ENCODE measurements at regions of chr15 and their contacts with region 1.

Region 1: DNA sequence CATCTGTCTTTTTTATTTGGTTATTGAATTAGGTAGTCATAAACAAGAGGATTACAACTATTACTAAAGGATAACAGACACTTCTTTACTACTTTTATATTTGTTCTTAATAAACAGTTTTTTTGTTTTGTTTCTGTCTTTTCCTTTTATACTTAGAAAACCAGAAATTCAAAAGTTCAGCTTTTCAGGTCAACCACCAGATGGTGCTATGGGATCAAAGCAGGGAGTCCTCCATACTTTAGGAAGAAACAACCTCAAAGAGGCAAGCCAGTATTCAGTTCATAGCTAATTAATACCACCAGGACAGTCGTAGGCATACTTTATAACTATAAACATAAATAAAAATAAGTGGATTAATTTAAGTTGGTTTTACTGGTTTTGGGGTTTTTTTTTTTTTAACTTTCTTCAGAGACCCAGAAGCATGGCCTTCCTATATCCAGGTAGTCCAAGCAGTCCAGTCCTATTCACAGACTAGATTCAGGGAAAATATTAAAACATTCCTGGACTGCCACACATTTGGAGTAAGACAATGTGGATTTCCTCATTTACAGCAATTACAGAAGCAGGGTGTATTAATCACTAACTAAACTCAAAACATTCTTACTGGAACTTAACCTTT is 16.0 kb upstream of the EID1 start:
- DNase-seq: peak; percentile 77
- H3K4me3 ChIP-seq: no peak overlapping the region
- H3K27ac ChIP-seq: no peak overlapping the region
- H3K4me1 ChIP-seq: peaks cover 26% of the 10 kb centered on the region
- H3K27me3 ChIP-seq: no peaks in the 10 kb centered on the region
- CTCF ChIP-seq: peak; percentile 92

Region 2: GRCh38 chr15:48717458-48717857 is 144.5 kb before region 1 on chr15:
- CTCF ChIA-PET with region 1: no interaction called
- POLR2A ChIA-PET with region 1: interaction called, 12 read pairs
- intact Hi-C with region 1: no loop called
- DNase-seq: no peak
- H3K4me3 ChIP-seq: no peak overlapping the region
- H3K27ac ChIP-seq: no peak overlapping the region
- H3K4me1 ChIP-seq: no peaks in the 10 kb centered on the region
- H3K27me3 ChIP-seq: no peaks in the 10 kb centered on the region
- CTCF ChIP-seq: peak; percentile 30; the same call in 1 of the 2 replicates

Region 3: GRCh38 chr15:48888836-48889235 is 26.9 kb after region 1 on chr15:
- CTCF ChIA-PET with region 1: no interaction called
- POLR2A ChIA-PET with region 1: no interaction called
- intact Hi-C with region 1: no loop called
- DNase-seq: no peak
- H3K4me3 ChIP-seq: no peak overlapping the region
- H3K27ac ChIP-seq: no peak overlapping the region
- H3K4me1 ChIP-seq: peaks cover 4% of the 10 kb centered on the region
- H3K27me3 ChIP-seq: no peaks in the 10 kb centered on the region
- CTCF ChIP-seq: no peak

Region 4: DNA sequence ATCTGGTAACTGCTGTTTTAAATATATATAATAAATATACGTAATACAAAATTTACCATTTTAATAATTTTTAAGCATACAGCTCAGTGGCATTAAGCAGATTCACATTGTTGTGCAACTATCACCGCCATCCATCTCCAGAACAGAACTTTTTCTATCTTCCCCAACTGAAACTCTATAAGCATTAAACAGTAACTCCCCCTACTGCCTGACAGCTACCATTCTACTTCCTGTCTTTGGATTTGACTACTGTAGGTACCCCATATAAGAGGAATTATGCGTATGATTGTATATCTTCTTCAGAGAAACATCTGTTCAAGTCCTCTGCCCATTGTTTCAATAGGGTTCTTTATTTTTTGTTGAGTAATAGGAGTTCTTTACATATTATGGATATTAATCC is 52.8 kb after region 1 on chr15:
- CTCF ChIA-PET with region 1: no interaction called
- POLR2A ChIA-PET with region 1: no interaction called
- intact Hi-C with region 1: no loop called
- DNase-seq: no peak
- H3K4me3 ChIP-seq: no peak overlapping the region
- H3K27ac ChIP-seq: no peak overlapping the region
- H3K4me1 ChIP-seq: peaks cover 21% of the 10 kb centered on the region
- H3K27me3 ChIP-seq: no peaks in the 10 kb centered on the region
- CTCF ChIP-seq: peak; percentile 30

Region 5: GRCh38 chr15:49036650-49037545 is 175.0 kb after region 1 on chr15:
- CTCF ChIA-PET with region 1: no interaction called
- POLR2A ChIA-PET with region 1: no interaction called
- intact Hi-C with region 1: loop called (anchors 10 kb)
- DNase-seq: no peak
- H3K4me3 ChIP-seq: no peak overlapping the region
- H3K27ac ChIP-seq: no peak overlapping the region
- H3K4me1 ChIP-seq: peaks cover 15% of the 10 kb centered on the region
- H3K27me3 ChIP-seq: no peaks in the 10 kb centered on the region
- CTCF ChIP-seq: no peak

Region 6: DNA sequence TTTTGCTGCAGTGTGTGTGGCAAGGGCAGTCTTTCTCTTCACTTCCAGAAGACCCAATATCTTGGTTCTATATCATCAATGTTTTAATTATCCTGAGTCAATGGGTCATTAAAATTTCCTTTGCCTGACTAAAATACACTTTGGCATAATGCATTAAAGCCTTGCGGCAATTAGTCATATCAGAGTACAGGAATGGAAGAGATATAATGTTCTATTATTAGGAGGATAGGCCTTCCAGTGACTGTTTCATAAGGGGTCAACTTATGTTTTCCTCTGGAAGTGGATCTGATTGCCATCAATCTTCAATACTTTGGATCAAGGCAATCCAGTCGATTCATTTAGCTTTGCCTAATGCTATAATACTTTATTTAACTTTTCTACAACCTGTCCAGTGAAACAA is 193.7 kb after region 1 on chr15:
- CTCF ChIA-PET with region 1: no interaction called
- POLR2A ChIA-PET with region 1: no interaction called
- intact Hi-C with region 1: no loop called
- DNase-seq: no peak
- H3K4me3 ChIP-seq: no peak overlapping the region
- H3K27ac ChIP-seq: no peak overlapping the region
- H3K4me1 ChIP-seq: no peaks in the 10 kb centered on the region
- H3K27me3 ChIP-seq: no peaks in the 10 kb centered on the region
- CTCF ChIP-seq: no peak

Region 7: DNA sequence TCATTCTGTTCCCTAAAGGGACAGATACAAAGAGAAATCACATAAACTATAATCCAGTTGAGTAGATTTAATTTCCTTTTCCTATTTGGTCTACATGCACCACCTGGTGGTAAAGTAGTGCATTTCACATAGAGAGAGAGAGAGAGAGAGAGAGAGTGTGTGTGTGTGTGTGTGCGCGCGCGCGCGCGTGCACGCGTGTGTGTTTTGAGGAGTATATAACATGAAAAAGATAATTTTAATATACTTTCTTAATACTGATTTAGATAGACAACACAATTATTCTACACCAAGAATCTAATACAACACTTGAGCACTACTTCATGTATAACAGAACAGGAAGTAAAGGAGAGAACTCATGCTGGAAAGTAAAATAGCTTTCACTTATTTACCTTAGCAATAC is 560.1 kb after region 1 on chr15:
- CTCF ChIA-PET with region 1: interaction called, 10 read pairs
- POLR2A ChIA-PET with region 1: no interaction called
- intact Hi-C with region 1: loop called (anchors 2 kb)
- DNase-seq: peak; percentile 79
- H3K4me3 ChIP-seq: no peak overlapping the region
- H3K27ac ChIP-seq: no peak overlapping the region
- H3K4me1 ChIP-seq: no peaks in the 10 kb centered on the region
- H3K27me3 ChIP-seq: no peaks in the 10 kb centered on the region
- CTCF ChIP-seq: peak; percentile 86

Region 8: DNA sequence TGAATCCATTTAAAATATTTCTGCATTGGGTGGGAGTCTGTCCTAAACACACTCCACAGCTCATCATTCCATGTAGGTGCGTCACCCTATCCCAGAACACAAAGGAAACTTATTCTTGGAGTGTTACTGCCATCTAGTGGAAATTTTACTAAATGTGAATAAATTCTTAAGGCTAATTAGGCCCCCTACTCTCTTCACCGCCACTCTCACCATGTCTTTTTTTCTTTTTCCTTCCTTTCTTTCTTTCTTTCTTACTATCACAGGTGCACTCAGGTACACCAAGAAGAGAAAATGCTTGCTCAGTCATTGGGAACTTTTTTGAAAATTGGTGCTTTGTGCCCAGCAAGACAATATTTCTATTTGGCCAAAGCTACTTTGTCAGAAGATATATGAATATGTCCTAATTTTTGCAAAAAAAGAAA is 1283.5 kb after region 1 on chr15:
- CTCF ChIA-PET with region 1: interaction called, 3 read pairs
- POLR2A ChIA-PET with region 1: no interaction called
- intact Hi-C with region 1: loop called (anchors 5 kb)
- DNase-seq: peak; percentile 86
- H3K4me3 ChIP-seq: no peak overlapping the region
- H3K27ac ChIP-seq: no peak overlapping the region
- H3K4me1 ChIP-seq: peaks cover 6% of the 10 kb centered on the region
- H3K27me3 ChIP-seq: no peaks in the 10 kb centered on the region
- CTCF ChIP-seq: peak; percentile 60